ENCODE measurements at regions of chr11 and their contacts with region 1.

Region 1: GRCh38 chr11:2002807-2003206 is 5.2 kb upstream of the H19 start:
- DNase-seq: no peak
- H3K4me3 ChIP-seq: no peak overlapping the region
- H3K27ac ChIP-seq: no peak overlapping the region
- H3K4me1 ChIP-seq: no peaks in the 10 kb centered on the region
- H3K27me3 ChIP-seq: no peaks in the 10 kb centered on the region

Region 2: GRCh38 chr11:1837171-1838076 is 165.4 kb before region 1 on chr11:
- CTCF ChIA-PET with region 1: interaction called, 52 read pairs
- POLR2A ChIA-PET with region 1: no interaction called
- DNase-seq: peak; percentile 79 to 90 (median 88)
- H3K4me3 ChIP-seq: no peak overlapping the region
- H3K27ac ChIP-seq: no peak overlapping the region
- H3K4me1 ChIP-seq: peaks cover 0 to 54% (median 38%) of the 10 kb centered on the region in 4 experiments
- H3K27me3 ChIP-seq: peaks cover 0 to 2% (median 0%) of the 10 kb centered on the region in 5 experiments

Region 3: GRCh38 chr11:1946812-1947484 is 55.9 kb before region 1 on chr11 and contains the start of gene MRPL23:
- CTCF ChIA-PET with region 1: interaction called, 19 read pairs
- POLR2A ChIA-PET with region 1: no interaction called
- DNase-seq: no peak
- H3K4me3 ChIP-seq: no peak within 1 kb of the TSS
- H3K27ac ChIP-seq: no peak within 1 kb of the TSS
- H3K4me1 ChIP-seq: peaks cover 0 to 13% (median 9%) of the 10 kb centered on the region in 4 experiments
- H3K27me3 ChIP-seq: no peaks in the 10 kb centered on the region

Region 4: DNA sequence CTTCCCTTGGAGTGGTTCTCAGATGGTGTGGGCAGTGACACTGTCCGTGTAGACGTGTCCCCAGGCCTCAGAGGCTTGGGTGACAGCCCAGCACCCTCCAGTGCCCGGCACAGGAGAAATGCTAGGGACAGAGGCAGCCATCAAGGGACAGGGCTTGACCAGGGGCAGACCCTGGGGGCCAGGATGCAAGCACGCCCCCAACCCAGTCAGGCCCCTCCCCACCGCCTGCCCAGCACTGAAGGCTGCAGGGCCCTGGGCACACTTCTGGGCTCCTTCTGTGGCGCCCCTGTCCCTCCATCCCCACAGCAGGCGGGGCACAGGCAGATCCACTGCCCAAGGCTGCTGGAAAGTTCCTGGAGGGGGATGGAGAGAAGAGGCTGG is 125.3 kb after region 1 on chr11:
- CTCF ChIA-PET with region 1: no interaction called
- POLR2A ChIA-PET with region 1: no interaction called
- DNase-seq: no peak
- H3K4me3 ChIP-seq: no peak overlapping the region
- H3K27ac ChIP-seq: no peak overlapping the region
- H3K4me1 ChIP-seq: no peaks in the 10 kb centered on the region
- H3K27me3 ChIP-seq: peaks cover 0 to 33% (median 5%) of the 10 kb centered on the region in 5 experiments

Measured in common myeloid progenitor, CD34-positive (primary cell).